Colonic mucosa (tissue), 4 donors: ENCODE measurements at regions of chr16 and their contacts with region 1.

Region 1: GRCh38 chr16:71883849-71884638 is at the start of gene ZNF821:
- DNase-seq: peak; percentile 73
- H3K4me3 ChIP-seq: peak within 1 kb of the TSS; percentile 97
- H3K27ac ChIP-seq: peak within 1 kb of the TSS; percentile 87
- H3K4me1 ChIP-seq: no peaks in the 10 kb centered on the region
- H3K27me3 ChIP-seq: no peaks in the 10 kb centered on the region
- CTCF ChIP-seq: peak; percentile 37
- total RNA-seq, gene ZNF821: 6.3 to 10.1 TPM

Region 2: GRCh38 chr16:71961066-71962039 is 77.3 kb after region 1 on chr16:
- intact Hi-C with region 1: loop called (anchors 5 kb)
- DNase-seq: peak; percentile 87
- H3K4me3 ChIP-seq: no peak overlapping the region
- H3K27ac ChIP-seq: no peak overlapping the region
- H3K4me1 ChIP-seq: no peaks in the 10 kb centered on the region
- H3K27me3 ChIP-seq: no peaks in the 10 kb centered on the region
- CTCF ChIP-seq: peak; percentile 61